ENCODE measurements at regions of chr7 and their contacts with region 1.

Region 1: GRCh38 chr7:158366916-158367633 is 220.5 kb downstream of the PTPRN2 start:
- DNase-seq: no peak
- ATAC-seq: no peak
- H3K4me3 ChIP-seq: no peak overlapping the region
- H3K27ac ChIP-seq: no peak overlapping the region
- H3K4me1 ChIP-seq: no peaks in the 10 kb centered on the region; the same call in 1 of the 2 replicates
- H3K27me3 ChIP-seq: peaks cover 3% of the 10 kb centered on the region; the same call in 1 of the 2 replicates
- CTCF ChIP-seq: no peak

Region 2: GRCh38 chr7:157949711-157950110 is 417.4 kb before region 1 on chr7:
- CTCF ChIA-PET with region 1: no interaction called
- POLR2A ChIA-PET with region 1: no interaction called
- in situ Hi-C with region 1: no loop called
- intact Hi-C with region 1: no loop called
- DNase-seq: no peak
- ATAC-seq: no peak
- H3K4me3 ChIP-seq: no peak overlapping the region
- H3K27ac ChIP-seq: no peak overlapping the region
- H3K4me1 ChIP-seq: no peaks in the 10 kb centered on the region
- H3K27me3 ChIP-seq: peaks cover 4% of the 10 kb centered on the region; the same call in 1 of the 2 replicates
- CTCF ChIP-seq: no peak

Region 3: GRCh38 chr7:158329014-158329610 is 38.0 kb before region 1 on chr7:
- CTCF ChIA-PET with region 1: no interaction called
- POLR2A ChIA-PET with region 1: no interaction called
- in situ Hi-C with region 1: no loop called
- intact Hi-C with region 1: no loop called
- DNase-seq: no peak
- ATAC-seq: no peak
- H3K4me3 ChIP-seq: no peak overlapping the region
- H3K27ac ChIP-seq: no peak overlapping the region
- H3K4me1 ChIP-seq: no peaks in the 10 kb centered on the region
- H3K27me3 ChIP-seq: no peaks in the 10 kb centered on the region
- CTCF ChIP-seq: no peak

Region 4: GRCh38 chr7:158407581-158408317 is 40.7 kb after region 1 on chr7:
- CTCF ChIA-PET with region 1: interaction called, 11 read pairs
- POLR2A ChIA-PET with region 1: no interaction called
- in situ Hi-C with region 1: no loop called
- intact Hi-C with region 1: no loop called
- DNase-seq: peak; percentile 50
- ATAC-seq: peak; percentile 80
- H3K4me3 ChIP-seq: no peak overlapping the region
- H3K27ac ChIP-seq: no peak overlapping the region
- H3K4me1 ChIP-seq: no peaks in the 10 kb centered on the region
- H3K27me3 ChIP-seq: no peaks in the 10 kb centered on the region
- CTCF ChIP-seq: peak; percentile 66